Heart right ventricle (tissue), 16 donors: ENCODE measurements at regions of chr11 and their contacts with region 1.

Region 1: DNA sequence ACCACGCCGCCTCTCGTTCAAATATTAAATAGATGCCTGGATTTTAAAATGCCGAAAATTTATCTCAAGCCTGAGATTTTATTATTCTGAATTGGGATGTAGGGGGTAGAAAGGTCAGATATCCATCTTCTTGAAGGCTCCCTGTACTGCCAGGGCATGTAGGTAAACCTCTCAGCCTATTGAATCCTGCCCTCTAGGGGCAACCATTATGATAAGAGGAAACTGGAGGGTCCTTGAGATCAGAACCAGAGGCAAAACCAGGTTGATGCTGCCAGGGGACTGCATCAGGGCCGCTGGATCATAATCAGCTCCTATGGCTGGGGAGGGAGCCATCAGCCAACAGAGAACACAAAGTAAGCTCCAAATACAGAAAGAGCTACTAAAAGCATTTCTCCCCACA is 92.4 kb downstream of the KCNC1 start:
- DNase-seq: no peak
- ATAC-seq: no peak
- H3K4me3 ChIP-seq: no peak overlapping the region
- H3K27ac ChIP-seq: no peak overlapping the region
- H3K4me1 ChIP-seq: peaks cover 3 to 39% (median 14%) of the 10 kb centered on the region in 9 donors
- H3K27me3 ChIP-seq: no peaks in the 10 kb centered on the region
- CTCF ChIP-seq: peak in 2 of 9 donors; percentile 13 to 17

Region 2: GRCh38 chr11:17770048-17770652 is 56.9 kb before region 1 on chr11:
- intact Hi-C with region 1: loop called in 1 of 10 experiments (anchors 5 kb)
- DNase-seq: no peak
- ATAC-seq: no peak
- H3K4me3 ChIP-seq: no peak overlapping the region
- H3K27ac ChIP-seq: no peak overlapping the region
- H3K4me1 ChIP-seq: no peaks in the 10 kb centered on the region
- H3K27me3 ChIP-seq: no peaks in the 10 kb centered on the region
- CTCF ChIP-seq: no peak

Region 3: DNA sequence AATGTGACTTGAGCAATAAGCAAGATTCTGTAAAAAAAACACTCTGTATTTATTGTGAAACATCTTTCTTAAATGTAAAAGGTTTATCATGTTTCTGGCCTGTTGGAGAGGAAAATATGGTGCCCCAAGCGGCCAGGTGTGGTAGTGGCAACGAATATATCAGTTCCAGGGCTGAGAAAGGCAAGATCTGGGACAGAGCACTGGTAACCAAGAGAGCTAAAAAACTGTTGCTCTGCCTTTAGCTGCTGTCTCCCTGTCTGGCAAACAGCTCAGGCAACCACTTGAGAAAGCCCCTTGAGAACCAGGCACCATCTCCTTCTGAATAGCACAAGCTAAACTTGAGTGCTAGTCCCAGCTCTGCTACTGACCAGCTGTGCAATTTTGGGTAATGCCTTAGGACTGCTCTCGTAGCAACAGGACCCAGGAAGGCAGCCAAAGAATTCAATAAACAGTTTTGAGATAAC is 37.5 kb after region 1 on chr11:
- intact Hi-C with region 1: no loop called
- DNase-seq: no peak
- ATAC-seq: no peak
- H3K4me3 ChIP-seq: no peak overlapping the region
- H3K27ac ChIP-seq: no peak overlapping the region
- H3K4me1 ChIP-seq: peaks cover 0 to 31% (median 4%) of the 10 kb centered on the region in 9 donors
- H3K27me3 ChIP-seq: no peaks in the 10 kb centered on the region
- CTCF ChIP-seq: peak in 6 of 9 donors; percentile 13 to 34 (median 20)

Region 4: DNA sequence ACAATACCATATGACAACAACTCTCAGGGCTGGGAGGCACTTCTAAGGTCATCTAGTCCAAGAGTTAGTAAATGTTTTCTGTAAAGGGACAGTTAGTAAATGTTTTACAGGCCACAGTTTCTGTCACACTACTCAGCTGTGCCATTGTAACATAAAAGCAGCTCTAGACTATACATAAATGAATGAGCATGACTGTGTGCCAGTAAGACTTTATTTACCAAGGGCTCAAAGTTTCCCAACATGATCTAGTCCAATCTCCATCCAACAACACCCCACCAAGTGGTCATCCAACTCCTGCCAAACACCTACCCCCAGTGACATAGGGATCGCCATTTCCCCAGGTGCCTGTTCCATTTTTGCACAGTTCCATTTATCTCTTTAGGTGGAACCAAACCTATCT is 173.8 kb after region 1 on chr11:
- intact Hi-C with region 1: no loop called
- DNase-seq: no peak
- ATAC-seq: no peak
- H3K4me3 ChIP-seq: no peak overlapping the region
- H3K27ac ChIP-seq: no peak overlapping the region
- H3K4me1 ChIP-seq: no peaks in the 10 kb centered on the region
- H3K27me3 ChIP-seq: no peaks in the 10 kb centered on the region
- CTCF ChIP-seq: no peak